Activated B cell treated with CpG ODN at 0.5 μM for 24 hours (primary cell): ENCODE measurements at regions of chr12 and their contacts with region 1.

Region 1: GRCh38 chr12:92072112-92072511 is 73.5 kb downstream of the BTG1 start:
- DNase-seq: no peak
- ATAC-seq: no peak
- H3K4me3 Mint-ChIP-seq: no peak overlapping the region
- H3K27ac Mint-ChIP-seq: no peak overlapping the region
- H3K4me1 Mint-ChIP-seq: peaks cover 28% of the 10 kb centered on the region
- H3K27me3 Mint-ChIP-seq: no peaks in the 10 kb centered on the region
- CTCF ChIP-seq: no peak

Region 2: GRCh38 chr12:91896286-91897024 is 175.7 kb before region 1 on chr12:
- CTCF ChIA-PET with region 1: no interaction called
- POLR2A ChIA-PET with region 1: no interaction called
- intact Hi-C with region 1: no loop called
- DNase-seq: no peak
- ATAC-seq: no peak
- H3K4me3 Mint-ChIP-seq: no peak overlapping the region
- H3K27ac Mint-ChIP-seq: no peak overlapping the region
- H3K4me1 Mint-ChIP-seq: no peaks in the 10 kb centered on the region
- H3K27me3 Mint-ChIP-seq: peaks cover 11% of the 10 kb centered on the region
- CTCF ChIP-seq: no peak

Region 3: DNA sequence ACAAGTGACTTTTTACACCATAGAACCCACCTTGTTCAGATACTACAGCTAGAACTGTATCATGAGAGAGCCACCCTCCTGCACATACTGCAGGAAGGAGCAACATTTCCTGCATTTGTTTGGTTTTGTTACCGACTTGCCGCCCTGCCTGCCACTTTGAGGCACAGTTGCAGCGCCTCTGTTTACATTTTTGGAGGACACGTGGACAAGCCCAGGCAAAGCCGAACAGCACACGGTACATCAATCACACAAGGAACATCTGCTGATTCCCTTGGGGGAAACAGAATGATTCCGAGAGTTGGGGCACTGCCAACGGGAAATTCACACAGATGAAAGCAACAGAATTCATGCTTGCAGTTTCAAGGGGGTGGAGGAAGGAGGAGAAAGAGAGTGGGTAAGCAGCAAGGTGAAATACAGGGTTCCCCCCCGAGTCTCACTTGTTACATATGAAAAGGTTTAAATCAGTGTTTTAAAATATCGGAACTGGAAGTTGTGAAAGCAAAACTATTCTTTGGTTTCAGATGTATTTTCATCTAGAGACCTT is 37.2 kb before region 1 on chr12:
- CTCF ChIA-PET with region 1: no interaction called
- POLR2A ChIA-PET with region 1: no interaction called
- intact Hi-C with region 1: no loop called
- DNase-seq: peak; percentile 50
- ATAC-seq: peak; percentile 91
- H3K4me3 Mint-ChIP-seq: peak overlapping the region; percentile 67
- H3K27ac Mint-ChIP-seq: peak overlapping the region; percentile 86
- H3K4me1 Mint-ChIP-seq: peaks cover 65% of the 10 kb centered on the region
- H3K27me3 Mint-ChIP-seq: no peaks in the 10 kb centered on the region
- CTCF ChIP-seq: no peak

Region 4: DNA sequence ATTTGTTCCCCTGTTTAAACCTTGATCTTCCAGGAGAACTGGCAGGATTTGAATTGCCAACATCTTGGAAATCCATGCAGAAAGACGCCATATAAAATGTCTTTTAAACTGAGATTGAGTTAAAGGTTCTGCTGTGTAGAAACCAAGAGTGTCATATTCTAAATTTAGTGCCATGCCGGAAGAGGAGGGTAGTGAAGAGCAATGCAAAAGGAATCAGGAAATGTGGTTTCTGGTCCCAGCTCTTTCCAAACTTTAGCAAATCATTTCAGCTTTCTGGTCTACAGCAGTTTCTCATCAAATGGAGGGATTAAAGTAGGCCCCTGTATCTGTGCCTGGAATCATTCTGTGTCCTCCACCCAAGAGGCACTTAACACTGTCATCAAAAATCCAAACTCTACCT is 12.1 kb before region 1 on chr12:
- CTCF ChIA-PET with region 1: no interaction called
- POLR2A ChIA-PET with region 1: no interaction called
- intact Hi-C with region 1: no loop called
- DNase-seq: no peak
- ATAC-seq: no peak
- H3K4me3 Mint-ChIP-seq: no peak overlapping the region
- H3K27ac Mint-ChIP-seq: no peak overlapping the region
- H3K4me1 Mint-ChIP-seq: peaks cover 70% of the 10 kb centered on the region
- H3K27me3 Mint-ChIP-seq: no peaks in the 10 kb centered on the region
- CTCF ChIP-seq: no peak

Region 5: GRCh38 chr12:92396647-92397252 is 324.6 kb after region 1 on chr12:
- CTCF ChIA-PET with region 1: no interaction called
- POLR2A ChIA-PET with region 1: interaction called, 14 read pairs
- intact Hi-C with region 1: no loop called
- DNase-seq: no peak
- ATAC-seq: no peak
- H3K4me3 Mint-ChIP-seq: no peak overlapping the region
- H3K27ac Mint-ChIP-seq: peak overlapping the region; percentile 93
- H3K4me1 Mint-ChIP-seq: peaks cover 70% of the 10 kb centered on the region
- H3K27me3 Mint-ChIP-seq: no peaks in the 10 kb centered on the region
- CTCF ChIP-seq: no peak